CD8-positive, alpha-beta memory T cell (primary cell): ENCODE measurements at regions of chr14 and their contacts with region 1.

Region 1: GRCh38 chr14:60317609-60318008 is 68.6 kb downstream of the PPM1A start:
- DNase-seq: no peak
- H3K4me3 ChIP-seq: no peak overlapping the region
- H3K4me3 Mint-ChIP-seq: no peak overlapping the region
- H3K27ac ChIP-seq: no peak overlapping the region
- H3K27ac Mint-ChIP-seq: no peak overlapping the region
- H3K4me1 ChIP-seq: no peaks in the 10 kb centered on the region
- H3K4me1 Mint-ChIP-seq: no peaks in the 10 kb centered on the region
- H3K27me3 ChIP-seq: no peaks in the 10 kb centered on the region
- H3K27me3 Mint-ChIP-seq: peaks cover 9 to 28% of the 10 kb centered on the region in 2 donors

Region 2: DNA sequence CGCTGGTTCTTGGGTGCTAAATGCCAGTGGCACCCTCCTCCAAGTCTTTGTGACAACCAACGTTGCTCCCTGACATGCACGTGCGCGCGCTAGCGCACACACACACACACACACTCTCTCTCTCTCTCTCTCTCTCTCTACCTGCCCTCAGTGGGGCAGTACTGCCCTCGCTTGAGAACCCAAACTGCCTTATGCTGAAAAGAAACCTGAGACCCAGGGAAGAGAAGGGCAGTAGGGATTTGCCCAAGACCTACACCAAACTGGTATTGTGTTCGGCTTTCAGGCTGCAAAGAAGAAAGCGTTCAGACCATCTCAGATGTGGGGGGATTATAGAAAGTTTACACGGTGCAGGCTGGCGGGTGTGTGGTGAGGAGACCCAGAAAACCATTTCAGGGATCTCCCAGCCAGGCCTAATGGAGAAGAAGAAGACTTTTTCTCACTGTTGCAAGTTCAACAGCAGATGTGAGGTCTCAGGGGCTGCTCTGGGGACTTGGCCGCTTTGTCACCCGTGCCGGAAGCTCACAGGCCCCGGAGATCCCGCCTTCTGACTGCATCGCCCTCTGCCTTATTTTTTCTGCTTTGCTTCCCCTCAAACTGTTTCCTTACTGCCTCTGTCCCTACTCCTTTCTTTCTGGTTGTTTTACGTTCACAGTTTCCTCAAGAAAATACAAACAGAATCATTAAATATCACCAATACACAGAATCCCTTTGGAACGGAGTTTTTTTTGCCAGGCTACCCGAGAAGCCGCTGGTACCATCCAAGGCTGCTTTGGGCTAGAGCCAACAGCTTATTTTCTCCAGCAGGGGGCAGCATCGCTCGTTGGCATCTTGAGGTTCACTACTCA is 13.8 kb after region 1 on chr14:
- CTCF ChIA-PET with region 1: interaction called, 11 read pairs
- POLR2A ChIA-PET with region 1: no interaction called
- DNase-seq: peak; percentile 62 to 80 (median 70)
- H3K4me3 ChIP-seq: peak overlapping the region; percentile 79
- H3K4me3 Mint-ChIP-seq: peak overlapping the region; percentile 91 to 99 (median 96)
- H3K27ac ChIP-seq: no peak overlapping the region
- H3K27ac Mint-ChIP-seq: peak overlapping the region; percentile 77 to 94 (median 89)
- H3K4me1 ChIP-seq: peaks cover 9% of the 10 kb centered on the region
- H3K4me1 Mint-ChIP-seq: peaks cover 22 to 36% (median 28%) of the 10 kb centered on the region in 3 donors
- H3K27me3 ChIP-seq: no peaks in the 10 kb centered on the region
- H3K27me3 Mint-ChIP-seq: peaks cover 36 to 60% of the 10 kb centered on the region in 2 donors